ENCODE measurements at regions of chr6 and their contacts with region 1.

Region 1: GRCh38 chr6:168370310-168370991 is 50.9 kb upstream of the DACT2 start:
- DNase-seq: no peak
- H3K4me3 ChIP-seq: no peak overlapping the region
- H3K27ac ChIP-seq: no peak overlapping the region
- H3K4me1 ChIP-seq: no peaks in the 10 kb centered on the region
- H3K27me3 ChIP-seq: no peaks in the 10 kb centered on the region
- CTCF ChIP-seq: peak; percentile 70 to 77
- POLR2A ChIP-seq: no peak

Region 2: DNA sequence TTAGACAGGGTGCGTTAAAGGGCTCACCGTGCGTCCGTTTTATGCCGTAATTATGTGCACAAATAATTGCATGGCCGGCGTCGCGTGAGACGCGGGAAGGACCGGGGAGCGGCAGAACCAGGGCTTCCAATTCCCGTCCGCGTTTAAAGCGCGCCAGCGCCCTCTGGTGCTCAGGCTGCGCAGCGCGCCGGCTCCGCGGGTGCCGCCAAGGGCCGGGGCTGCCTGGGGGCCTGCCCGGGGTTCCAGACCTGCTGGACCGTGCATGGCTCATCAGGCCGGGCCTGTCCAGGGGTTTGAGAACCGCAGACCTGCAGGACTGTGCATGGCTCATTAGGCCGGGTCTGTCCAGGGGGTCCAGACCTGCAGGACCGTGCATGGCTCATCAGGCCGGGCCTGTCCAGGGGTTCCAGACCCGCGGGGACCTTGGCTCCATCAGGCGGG is 514.2 kb after region 1 on chr6:
- CTCF ChIA-PET with region 1: no interaction called
- POLR2A ChIA-PET with region 1: no interaction called
- dilution Hi-C with region 1: no loop called
- intact Hi-C with region 1: loop called (anchors 1 kb)
- DNase-seq: peak; percentile 4
- H3K4me3 ChIP-seq: no peak overlapping the region
- H3K27ac ChIP-seq: no peak overlapping the region
- H3K4me1 ChIP-seq: no peaks in the 10 kb centered on the region
- H3K27me3 ChIP-seq: no peaks in the 10 kb centered on the region
- CTCF ChIP-seq: peak; percentile 77 to 85
- POLR2A ChIP-seq: no peak